ENCODE measurements at regions of chr15 and their contacts with region 1.

Region 1: GRCh38 chr15:50440932-50441331 is 16.7 kb downstream of the USP8 start:
- DNase-seq: no peak
- H3K4me3 ChIP-seq: no peak overlapping the region
- H3K27ac ChIP-seq: no peak overlapping the region
- H3K4me1 ChIP-seq: peaks cover 15% of the 10 kb centered on the region
- CTCF ChIP-seq: no peak

Region 2: DNA sequence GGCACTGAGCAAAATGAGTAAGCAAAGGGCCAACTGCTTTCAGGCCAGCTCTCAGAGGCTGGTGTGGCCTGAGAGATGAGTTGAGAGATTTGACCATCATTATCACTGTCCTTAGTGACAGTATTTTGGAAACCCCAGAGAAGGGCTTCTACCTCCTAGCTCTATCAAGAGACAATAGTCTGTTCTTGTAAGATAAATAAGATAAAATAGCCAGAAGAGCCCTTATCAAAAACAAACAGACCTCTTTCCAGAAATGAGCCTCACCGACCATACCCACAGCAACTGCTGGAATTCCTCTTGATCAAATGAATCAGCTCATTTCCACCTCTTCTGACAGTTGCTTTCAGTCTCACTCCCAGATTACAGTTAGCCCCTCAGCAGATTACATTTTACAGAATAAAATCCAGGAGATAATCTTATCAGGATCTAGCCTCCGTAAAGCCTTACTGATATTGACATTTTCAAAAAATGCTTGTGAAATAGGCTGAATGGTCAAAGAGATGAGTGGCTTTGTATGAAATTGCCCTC is 179.9 kb before region 1 on chr15:
- CTCF ChIA-PET with region 1: no interaction called
- POLR2A ChIA-PET with region 1: no interaction called
- intact Hi-C with region 1: no loop called
- DNase-seq: no peak
- H3K4me3 ChIP-seq: no peak overlapping the region
- H3K27ac ChIP-seq: no peak overlapping the region
- H3K4me1 ChIP-seq: no peaks in the 10 kb centered on the region
- CTCF ChIP-seq: no peak

Region 3: GRCh38 chr15:50424066-50424890 is 16.7 kb before region 1 on chr15 and contains the start of gene USP8:
- CTCF ChIA-PET with region 1: no interaction called
- POLR2A ChIA-PET with region 1: no interaction called
- intact Hi-C with region 1: loop called (anchors 1 kb)
- DNase-seq: peak; percentile 98
- H3K4me3 ChIP-seq: peak within 1 kb of the TSS; percentile 89
- H3K27ac ChIP-seq: peak within 1 kb of the TSS; percentile 56
- H3K4me1 ChIP-seq: peaks cover 20% of the 10 kb centered on the region
- CTCF ChIP-seq: no peak
- total RNA-seq, gene USP8: 27.9 and 34.1 TPM in 2 replicates

Region 4: GRCh38 chr15:50908210-50909009 is 467.5 kb after region 1 on chr15 and contains the start of gene AP4E1:
- CTCF ChIA-PET with region 1: no interaction called
- POLR2A ChIA-PET with region 1: no interaction called
- intact Hi-C with region 1: loop called (anchors 10 kb)
- DNase-seq: peak; percentile 93
- H3K4me3 ChIP-seq: peak within 1 kb of the TSS; percentile 94
- H3K27ac ChIP-seq: peak within 1 kb of the TSS; percentile 51
- H3K4me1 ChIP-seq: peaks cover 15% of the 10 kb centered on the region
- CTCF ChIP-seq: peak; percentile 83
- total RNA-seq, gene AP4E1: 5.4 and 7.6 TPM in 2 replicates

Measured in OCI-LY7 (cell line).